Caco-2 (cell line): ENCODE measurements at regions of chr19 and their contacts with region 1.

Region 1: DNA sequence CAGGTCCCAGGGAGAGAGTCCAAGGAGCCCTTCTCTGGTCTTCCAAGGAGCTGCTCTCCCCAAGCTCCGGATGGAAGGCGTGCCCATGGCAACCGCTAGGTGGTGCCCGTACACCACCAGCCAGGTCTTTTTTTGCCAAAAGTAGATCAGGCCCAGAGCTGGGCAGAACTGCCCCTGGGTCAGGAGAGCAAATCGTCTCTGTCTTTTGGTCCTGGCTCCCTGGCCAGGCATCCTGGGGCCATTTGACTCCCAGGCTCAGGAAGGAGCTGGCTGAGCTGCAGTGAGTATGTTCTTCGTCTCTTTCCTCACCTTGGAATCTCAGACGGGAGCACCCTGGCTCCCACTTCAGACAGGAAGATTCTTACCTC is 24.6 kb upstream of the BCL3 start:
- DNase-seq: peak; percentile 87 to 91
- H3K4me3 ChIP-seq: peak overlapping the region; percentile 15
- H3K4me3 Mint-ChIP-seq: peak overlapping the region; percentile 62
- H3K27ac Mint-ChIP-seq: peak overlapping the region; percentile 43
- H3K4me1 ChIP-seq: peaks cover 53% of the 10 kb centered on the region
- H3K4me1 Mint-ChIP-seq: peaks cover 47% of the 10 kb centered on the region
- H3K27me3 ChIP-seq: no peaks in the 10 kb centered on the region
- H3K27me3 Mint-ChIP-seq: no peaks in the 10 kb centered on the region
- CTCF ChIP-seq: peak; percentile 97 to 98

Region 2: GRCh38 chr19:44741841-44742352 is 18.0 kb after region 1 on chr19:
- CTCF ChIA-PET with region 1: interaction called, 12 read pairs
- POLR2A ChIA-PET with region 1: interaction called, 9 read pairs
- intact Hi-C with region 1: loop called (anchors 1 kb)
- DNase-seq: peak; percentile 82 to 87
- H3K4me3 ChIP-seq: no peak overlapping the region
- H3K4me3 Mint-ChIP-seq: peak overlapping the region; percentile 44
- H3K27ac Mint-ChIP-seq: peak overlapping the region; percentile 97
- H3K4me1 ChIP-seq: peaks cover 66% of the 10 kb centered on the region
- H3K4me1 Mint-ChIP-seq: peaks cover 31% of the 10 kb centered on the region
- H3K27me3 ChIP-seq: no peaks in the 10 kb centered on the region
- H3K27me3 Mint-ChIP-seq: no peaks in the 10 kb centered on the region
- CTCF ChIP-seq: no peak

Region 3: GRCh38 chr19:44753932-44754749 is 30.2 kb after region 1 on chr19:
- CTCF ChIA-PET with region 1: interaction called, 8 read pairs
- POLR2A ChIA-PET with region 1: interaction called, 10 read pairs
- intact Hi-C with region 1: no loop called
- DNase-seq: peak in 1 of 2 experiments; percentile 48
- H3K4me3 ChIP-seq: peak overlapping the region; percentile 27
- H3K4me3 Mint-ChIP-seq: peak overlapping the region; percentile 60
- H3K27ac Mint-ChIP-seq: no peak overlapping the region
- H3K4me1 ChIP-seq: peaks cover 28% of the 10 kb centered on the region
- H3K4me1 Mint-ChIP-seq: peaks cover 5% of the 10 kb centered on the region
- H3K27me3 ChIP-seq: no peaks in the 10 kb centered on the region
- H3K27me3 Mint-ChIP-seq: no peaks in the 10 kb centered on the region
- CTCF ChIP-seq: no peak

Region 4: GRCh38 chr19:44785246-44785645 is 61.3 kb after region 1 on chr19:
- CTCF ChIA-PET with region 1: interaction called, 15 read pairs
- POLR2A ChIA-PET with region 1: no interaction called
- intact Hi-C with region 1: no loop called
- DNase-seq: no peak
- H3K4me3 ChIP-seq: no peak overlapping the region
- H3K4me3 Mint-ChIP-seq: no peak overlapping the region
- H3K27ac Mint-ChIP-seq: no peak overlapping the region
- H3K4me1 ChIP-seq: peaks cover 5% of the 10 kb centered on the region; the same call in 1 of the 2 replicates
- H3K4me1 Mint-ChIP-seq: peaks cover 14% of the 10 kb centered on the region
- H3K27me3 ChIP-seq: no peaks in the 10 kb centered on the region
- H3K27me3 Mint-ChIP-seq: no peaks in the 10 kb centered on the region
- CTCF ChIP-seq: no peak